Activated CD8-positive, alpha-beta T cell treated with anti-CD3 and anti-CD28 coated beads for 36 hours (primary cell): ENCODE measurements at regions of chr2 and their contacts with region 1.

Region 1: DNA sequence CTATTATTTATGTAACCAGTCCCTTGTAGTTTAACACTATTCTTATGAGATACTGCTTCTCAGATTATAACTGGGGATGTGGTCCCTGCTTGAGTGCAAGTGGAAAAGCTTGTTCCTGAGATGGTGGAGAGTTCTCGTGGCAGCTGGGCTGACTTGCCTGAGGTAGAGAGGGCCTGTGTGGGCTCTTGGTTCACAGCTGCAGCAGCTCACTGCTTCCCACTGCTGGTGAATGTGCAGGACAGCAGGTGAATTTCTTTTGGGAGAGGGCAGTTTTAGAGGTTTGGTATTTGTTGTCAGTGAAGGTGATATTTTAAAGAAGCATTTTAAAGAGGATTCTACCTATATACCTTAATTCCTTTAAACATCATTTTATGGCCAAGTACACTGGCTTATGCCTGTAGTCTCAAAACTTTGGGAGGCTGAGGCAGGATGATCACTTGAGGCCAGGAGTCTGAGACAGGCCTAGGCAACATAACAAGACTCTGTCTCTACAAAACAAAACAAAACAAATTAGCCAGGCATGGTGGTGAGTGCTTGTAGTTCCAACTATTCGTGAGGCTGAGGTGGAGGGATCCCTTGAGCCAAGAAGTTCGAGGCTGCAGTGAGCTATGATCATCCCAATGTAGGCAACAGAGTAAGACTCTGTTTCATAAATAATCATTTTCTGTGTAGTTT is 94.8 kb downstream of the MTA3 start:
- DNase-seq: peak; percentile 71
- ATAC-seq: peak; percentile 99
- H3K4me3 Mint-ChIP-seq: no peak overlapping the region
- H3K27ac Mint-ChIP-seq: peak overlapping the region; percentile 57
- H3K4me1 Mint-ChIP-seq: peaks cover 16% of the 10 kb centered on the region
- H3K27me3 Mint-ChIP-seq: no peaks in the 10 kb centered on the region
- CTCF ChIP-seq: peak; percentile 87

Region 2: GRCh38 chr2:42494355-42495233 is 168.6 kb before region 1 on chr2:
- CTCF ChIA-PET with region 1: interaction called, 32 read pairs
- POLR2A ChIA-PET with region 1: interaction called, 5 read pairs
- intact Hi-C with region 1: loop called (anchors 2 kb)
- DNase-seq: peak; percentile 89
- ATAC-seq: peak; percentile 55
- H3K4me3 Mint-ChIP-seq: peak overlapping the region; percentile 97
- H3K27ac Mint-ChIP-seq: peak overlapping the region; percentile 78
- H3K4me1 Mint-ChIP-seq: peaks cover 17% of the 10 kb centered on the region
- H3K27me3 Mint-ChIP-seq: peaks cover 6% of the 10 kb centered on the region
- CTCF ChIP-seq: peak; percentile 93

Region 3: DNA sequence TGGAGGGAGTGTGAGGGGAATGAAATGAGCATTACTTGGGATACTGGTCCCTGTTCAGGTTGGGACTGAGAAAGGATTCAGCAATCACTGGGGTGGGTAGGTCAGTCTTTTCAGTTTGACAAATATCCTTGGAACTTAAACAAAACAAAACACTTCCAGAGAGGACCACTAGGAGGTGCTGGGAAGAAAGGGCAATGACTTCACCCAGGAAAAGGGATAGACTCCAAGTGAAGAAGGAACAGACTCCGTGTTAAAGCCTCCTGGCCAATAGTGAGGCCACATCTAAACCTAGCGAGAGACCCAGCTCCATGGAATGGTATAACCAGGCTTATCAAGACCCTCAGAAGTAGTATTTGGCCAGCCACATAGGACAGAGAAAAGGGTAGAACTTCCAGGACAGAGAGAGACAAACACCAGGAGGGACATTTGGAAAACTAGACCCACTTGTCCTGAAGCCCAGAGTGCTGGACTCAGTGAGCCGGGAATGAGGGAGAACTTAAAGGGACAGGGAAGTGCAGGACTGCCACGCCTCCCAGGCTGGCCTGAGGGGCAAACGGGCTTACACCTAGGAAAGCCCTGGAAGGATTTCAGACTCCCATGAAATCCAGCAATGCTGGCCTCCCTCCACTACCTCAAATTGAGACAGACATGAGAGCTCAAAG is 149.9 kb before region 1 on chr2:
- CTCF ChIA-PET with region 1: interaction called, 17 read pairs
- POLR2A ChIA-PET with region 1: no interaction called
- intact Hi-C with region 1: loop called (anchors 5 kb)
- DNase-seq: peak; percentile 15
- ATAC-seq: peak; percentile 39
- H3K4me3 Mint-ChIP-seq: no peak overlapping the region
- H3K27ac Mint-ChIP-seq: no peak overlapping the region
- H3K4me1 Mint-ChIP-seq: peaks cover 12% of the 10 kb centered on the region
- H3K27me3 Mint-ChIP-seq: no peaks in the 10 kb centered on the region
- CTCF ChIP-seq: peak; percentile 60

Region 4: GRCh38 chr2:42648796-42649195 is 14.4 kb before region 1 on chr2:
- CTCF ChIA-PET with region 1: interaction called, 30 read pairs
- POLR2A ChIA-PET with region 1: no interaction called
- intact Hi-C with region 1: no loop called
- DNase-seq: no peak
- ATAC-seq: no peak
- H3K4me3 Mint-ChIP-seq: no peak overlapping the region
- H3K27ac Mint-ChIP-seq: peak overlapping the region; percentile 55
- H3K4me1 Mint-ChIP-seq: peaks cover 42% of the 10 kb centered on the region
- H3K27me3 Mint-ChIP-seq: no peaks in the 10 kb centered on the region
- CTCF ChIP-seq: no peak

Region 5: DNA sequence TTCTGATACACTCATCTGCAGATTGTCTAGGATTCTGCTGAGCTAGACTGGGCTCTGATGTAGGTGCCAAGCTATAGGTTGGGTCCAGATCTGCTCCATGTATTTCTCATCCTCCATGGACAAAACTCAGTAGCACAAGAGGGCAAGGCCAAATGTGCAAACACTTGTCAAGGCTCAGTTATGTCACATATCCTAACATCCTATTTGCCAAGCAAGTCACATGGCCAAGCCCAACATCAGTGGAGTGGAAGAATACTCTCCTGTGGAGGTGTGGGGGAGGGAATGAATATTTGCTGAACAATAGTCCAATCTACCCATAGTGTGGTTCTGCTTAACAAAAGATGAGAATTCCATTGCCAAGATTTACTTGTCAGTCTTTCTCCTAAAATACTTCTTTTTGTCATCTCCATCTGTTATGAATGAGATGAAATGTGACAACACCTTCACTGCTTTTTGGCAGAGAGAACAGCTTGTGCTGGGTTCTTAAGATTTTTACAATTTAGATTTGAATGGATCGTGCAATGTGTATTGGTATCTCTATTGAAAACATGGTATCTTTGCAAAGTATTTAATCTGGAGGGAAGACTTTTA is 10.8 kb after region 1 on chr2:
- CTCF ChIA-PET with region 1: interaction called, 18 read pairs
- POLR2A ChIA-PET with region 1: no interaction called
- intact Hi-C with region 1: no loop called
- DNase-seq: no peak
- ATAC-seq: no peak
- H3K4me3 Mint-ChIP-seq: no peak overlapping the region
- H3K27ac Mint-ChIP-seq: no peak overlapping the region
- H3K4me1 Mint-ChIP-seq: peaks cover 7% of the 10 kb centered on the region
- H3K27me3 Mint-ChIP-seq: no peaks in the 10 kb centered on the region
- CTCF ChIP-seq: no peak

Region 6: GRCh38 chr2:42819160-42819559 is 155.9 kb after region 1 on chr2:
- CTCF ChIA-PET with region 1: no interaction called
- POLR2A ChIA-PET with region 1: no interaction called
- intact Hi-C with region 1: no loop called
- DNase-seq: no peak
- ATAC-seq: no peak
- H3K4me3 Mint-ChIP-seq: no peak overlapping the region
- H3K27ac Mint-ChIP-seq: no peak overlapping the region
- H3K4me1 Mint-ChIP-seq: no peaks in the 10 kb centered on the region
- H3K27me3 Mint-ChIP-seq: no peaks in the 10 kb centered on the region
- CTCF ChIP-seq: no peak